ENCODE measurements at regions of chr16 and their contacts with region 1.

Region 1: GRCh38 chr16:27326738-27327585 is 13.2 kb downstream of the IL4R start:
- DNase-seq: peak; percentile 90

Region 2: DNA sequence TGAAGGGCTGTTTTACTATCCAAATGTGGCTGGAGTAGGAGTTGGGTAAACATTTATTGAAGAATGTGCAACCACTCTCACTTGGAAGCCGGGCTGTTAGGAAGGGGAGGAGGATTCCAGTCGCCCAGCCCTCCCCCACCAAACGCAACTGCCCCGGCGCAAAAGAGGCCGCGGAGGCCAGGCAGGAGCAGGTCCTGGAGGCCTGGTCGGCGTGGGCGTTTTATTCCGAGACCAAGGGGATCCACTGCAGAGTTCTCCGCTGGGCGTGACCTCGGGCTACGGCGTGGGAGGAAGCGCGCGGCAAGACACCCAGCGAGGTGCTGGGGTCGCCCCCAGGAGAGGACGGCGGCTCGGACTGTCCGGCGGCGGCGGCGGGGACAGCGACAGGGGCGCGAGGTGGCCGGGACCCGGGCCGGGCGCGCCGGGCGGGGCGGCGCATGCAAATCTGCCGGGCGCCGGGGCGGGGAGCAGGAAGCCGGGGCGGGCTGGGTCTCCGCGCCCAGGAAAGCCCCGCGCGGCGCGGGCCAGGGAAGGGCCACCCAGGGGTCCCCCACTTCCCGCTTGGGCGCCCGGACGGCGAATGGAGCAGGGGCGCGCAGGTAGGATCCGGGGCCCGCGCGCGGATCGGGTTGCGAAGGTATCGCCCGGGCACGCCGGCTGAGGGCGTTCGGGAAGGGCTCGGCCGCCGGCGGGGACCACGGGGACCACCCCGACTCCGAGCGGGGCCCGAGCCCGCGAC is 13.4 kb before region 1 on chr16 and contains the start of gene IL4R:
- intact Hi-C with region 1: loop called (anchors 2 kb)
- DNase-seq: peak; percentile 90
- total RNA-seq, gene IL4R: 22.0 TPM

Region 3: GRCh38 chr16:27515874-27516353 is 189.0 kb after region 1 on chr16:
- intact Hi-C with region 1: no loop called
- DNase-seq: no peak

Measured in cardiac septum (tissue), 1 donor.